Heart left ventricle (tissue), 16 donors: ENCODE measurements at regions of chr1 and their contacts with region 1.

Region 1: GRCh38 chr1:86833461-86834215 is 80.3 kb downstream of the SELENOF start:
- DNase-seq: peak; percentile 62 to 77 (median 64)
- ATAC-seq: peak; percentile 65 to 93 (median 88)
- H3K4me3 ChIP-seq: no peak overlapping the region
- H3K27ac ChIP-seq: no peak overlapping the region
- H3K4me1 ChIP-seq: peaks cover 0 to 8% (median 0%) of the 10 kb centered on the region in 12 donors
- H3K27me3 ChIP-seq: no peaks in the 10 kb centered on the region
- CTCF ChIP-seq: peak; percentile 51 to 75 (median 62)
- POLR2A ChIP-seq: no peak

Region 2: DNA sequence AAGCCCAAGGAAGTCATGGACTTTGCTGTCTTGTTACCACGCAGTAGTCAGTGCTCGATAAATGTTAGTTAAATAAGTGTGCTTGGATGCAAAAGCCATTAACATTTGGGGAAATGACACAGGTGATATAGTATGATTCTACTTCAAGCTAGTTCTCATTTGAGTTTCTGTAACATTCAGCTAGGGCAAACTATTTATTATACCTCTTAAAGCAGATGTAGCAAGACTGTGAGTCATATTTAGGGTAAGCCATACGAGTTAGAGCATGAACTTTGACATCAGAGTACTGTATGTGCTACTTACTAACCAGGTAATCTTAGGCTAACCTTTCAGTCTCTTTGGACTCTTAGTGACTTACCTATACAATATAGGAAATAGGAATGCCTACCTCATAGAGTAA is 265.8 kb before region 1 on chr1:
- intact Hi-C with region 1: no loop called
- DNase-seq: no peak
- ATAC-seq: no peak
- H3K4me3 ChIP-seq: no peak overlapping the region
- H3K27ac ChIP-seq: no peak overlapping the region
- H3K4me1 ChIP-seq: no peaks in the 10 kb centered on the region
- H3K27me3 ChIP-seq: no peaks in the 10 kb centered on the region
- CTCF ChIP-seq: no peak
- POLR2A ChIP-seq: no peak

Region 3: DNA sequence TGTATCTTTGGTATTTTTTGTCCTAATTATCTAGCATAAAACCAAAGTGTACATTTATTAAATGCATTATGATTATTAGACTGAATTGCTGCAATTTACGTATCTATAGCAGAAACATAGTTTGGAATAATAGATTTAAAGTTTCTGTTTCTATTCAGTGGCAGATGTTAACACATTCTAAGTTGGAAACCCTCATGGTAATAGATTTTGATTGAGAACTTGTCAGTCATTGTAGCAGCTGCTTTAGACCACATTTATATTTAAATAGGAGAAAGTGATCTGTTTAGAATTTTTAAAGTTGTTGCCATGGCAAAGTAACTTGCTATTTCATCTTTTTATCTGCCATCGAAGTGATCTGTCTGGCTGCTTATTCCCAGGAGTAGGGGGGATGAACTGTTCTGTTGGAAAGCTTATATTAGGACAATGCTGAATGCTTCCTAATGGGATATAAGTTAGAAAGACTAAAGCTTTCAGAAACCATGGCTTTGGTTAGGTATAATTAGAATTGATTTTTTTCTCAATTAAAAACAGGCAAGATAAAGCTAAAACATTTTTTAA is 142.4 kb after region 1 on chr1:
- intact Hi-C with region 1: no loop called
- DNase-seq: no peak
- ATAC-seq: no peak
- H3K4me3 ChIP-seq: no peak overlapping the region
- H3K27ac ChIP-seq: no peak overlapping the region
- H3K4me1 ChIP-seq: peaks cover 0 to 17% (median 6%) of the 10 kb centered on the region in 12 donors
- H3K27me3 ChIP-seq: no peaks in the 10 kb centered on the region
- CTCF ChIP-seq: no peak
- POLR2A ChIP-seq: no peak

Region 4: DNA sequence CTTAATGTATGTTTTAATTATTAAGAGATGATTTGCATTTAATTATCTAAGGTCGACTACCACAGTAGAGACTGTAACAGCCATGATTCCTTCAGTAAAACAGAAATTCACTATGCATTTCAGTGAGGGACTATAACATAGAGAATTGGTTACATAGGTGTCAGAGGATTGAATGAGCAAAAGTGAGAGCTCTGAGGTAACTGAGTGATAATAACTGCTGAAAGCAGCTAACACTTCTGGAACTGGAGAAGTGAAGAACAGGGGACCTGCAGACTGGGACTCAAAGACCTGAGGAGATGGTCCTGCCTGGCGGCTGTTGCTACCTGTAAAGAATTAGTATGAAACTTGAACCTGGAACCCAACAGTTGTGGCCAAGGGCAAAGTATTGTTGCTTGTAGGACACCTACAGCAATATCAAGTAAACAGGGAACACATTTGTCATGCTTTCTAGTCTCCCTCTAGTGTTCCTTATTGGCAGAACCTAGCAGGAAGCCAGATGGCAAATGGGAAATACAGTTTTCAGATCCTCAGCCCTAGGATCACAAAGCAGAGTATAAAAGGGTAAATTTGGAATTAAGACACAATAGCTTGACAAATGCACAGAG is 191.4 kb after region 1 on chr1:
- intact Hi-C with region 1: loop called in 1 of 10 experiments (anchors 5 kb)
- DNase-seq: no peak
- ATAC-seq: peak in 3 of 4 donors; percentile 60 to 66 (median 66)
- H3K4me3 ChIP-seq: no peak overlapping the region
- H3K27ac ChIP-seq: no peak overlapping the region
- H3K4me1 ChIP-seq: peaks cover 0 to 19% (median 1%) of the 10 kb centered on the region in 12 donors
- H3K27me3 ChIP-seq: no peaks in the 10 kb centered on the region
- CTCF ChIP-seq: peak; percentile 21 to 63 (median 42)
- POLR2A ChIP-seq: no peak

Region 5: GRCh38 chr1:87084244-87084836 is 250.7 kb after region 1 on chr1:
- intact Hi-C with region 1: loop called (anchors 1 to 5 kb)
- DNase-seq: no peak
- ATAC-seq: peak in 1 of 4 donors; percentile 42
- H3K4me3 ChIP-seq: no peak overlapping the region
- H3K27ac ChIP-seq: no peak overlapping the region
- H3K4me1 ChIP-seq: peaks cover 0 to 8% (median 4%) of the 10 kb centered on the region in 12 donors
- H3K27me3 ChIP-seq: no peaks in the 10 kb centered on the region
- CTCF ChIP-seq: peak; percentile 57 to 85 (median 72)
- POLR2A ChIP-seq: no peak